Right ventricle myocardium inferior (tissue), 1 donor: ENCODE measurements at regions of chr7 and their contacts with region 1.

Region 1: GRCh38 chr7:39894904-39895303 is 55.2 kb upstream of the CDK13 start:
- DNase-seq: no peak
- ATAC-seq: no peak

Region 2: DNA sequence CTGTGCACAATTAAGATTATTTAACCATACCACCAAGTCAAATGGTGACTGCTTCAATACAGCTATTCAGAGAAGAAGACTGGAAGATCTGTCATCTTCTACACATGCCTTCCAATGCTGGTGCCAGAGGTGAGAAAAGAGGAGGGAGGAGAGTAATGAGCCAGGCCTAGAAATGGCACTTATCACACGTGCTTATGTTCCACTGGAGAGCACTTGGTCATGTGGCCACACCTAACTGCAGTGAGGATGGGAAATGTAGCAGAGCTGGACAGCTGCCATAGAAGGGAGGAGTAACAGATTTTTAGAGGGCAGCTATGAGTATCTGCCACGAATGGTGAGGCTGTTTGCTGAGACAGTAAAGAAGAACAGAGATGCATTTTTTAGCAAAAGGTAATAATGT is 162.4 kb after region 1 on chr7:
- intact Hi-C with region 1: loop called (anchors 1 kb)
- DNase-seq: no peak
- ATAC-seq: peak; percentile 64

Region 3: GRCh38 chr7:40134428-40135316 is 239.8 kb after region 1 on chr7 and contains the starts of genes MPLKIP and SUGCT:
- intact Hi-C with region 1: loop called (anchors 2 kb)
- DNase-seq: peak; percentile 93
- ATAC-seq: peak; percentile 97
- total RNA-seq, gene MPLKIP: 17.8 TPM
- total RNA-seq, gene SUGCT: 4.4 TPM